CD4-positive, alpha-beta memory T cell (primary cell): ENCODE measurements at regions of chr15 and their contacts with region 1.

Region 1: GRCh38 chr15:92942706-92943105 is 42.6 kb downstream of the CHD2 start:
- DNase-seq: no peak
- H3K4me3 ChIP-seq: no peak overlapping the region
- H3K4me3 Mint-ChIP-seq: no peak overlapping the region
- H3K27ac ChIP-seq: no peak overlapping the region
- H3K27ac Mint-ChIP-seq: peak overlapping the region in 4 of 7 donors; percentile 3 to 72 (median 18)
- H3K4me1 ChIP-seq: no peaks in the 10 kb centered on the region
- H3K4me1 Mint-ChIP-seq: peaks cover 10 to 15% (median 13%) of the 10 kb centered on the region in 4 donors
- H3K27me3 ChIP-seq: no peaks in the 10 kb centered on the region
- H3K27me3 Mint-ChIP-seq: no peaks in the 10 kb centered on the region

Region 2: DNA sequence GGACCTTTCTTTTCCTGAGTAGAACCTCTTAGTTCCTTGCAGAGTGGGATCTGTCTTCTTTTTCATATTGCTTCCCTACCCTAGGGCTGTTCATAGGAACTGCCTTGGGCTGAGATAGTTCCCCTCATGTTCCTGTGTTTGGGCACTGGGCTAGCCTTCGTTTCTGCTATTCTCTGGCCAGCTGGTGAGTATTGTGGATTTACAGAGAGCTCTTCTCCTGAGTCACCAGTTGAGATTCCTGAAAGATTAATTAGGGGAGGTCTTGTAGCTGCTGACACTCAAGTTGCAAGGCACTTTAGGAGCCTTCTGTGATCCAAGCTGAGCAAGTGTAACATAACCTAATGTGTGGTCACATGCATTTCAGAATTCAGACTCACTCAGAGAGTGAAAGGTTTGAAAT is 11.9 kb before region 1 on chr15:
- CTCF ChIA-PET with region 1: interaction called, 5 read pairs
- POLR2A ChIA-PET with region 1: interaction called, 6 read pairs
- intact Hi-C with region 1: loop called (anchors 2 kb)
- DNase-seq: no peak
- H3K4me3 ChIP-seq: no peak overlapping the region
- H3K4me3 Mint-ChIP-seq: peak overlapping the region in 2 of 8 donors; percentile 10 to 25
- H3K27ac ChIP-seq: no peak overlapping the region
- H3K27ac Mint-ChIP-seq: peak overlapping the region in 4 of 7 donors; percentile 5 to 68 (median 40)
- H3K4me1 ChIP-seq: peaks cover 40% of the 10 kb centered on the region
- H3K4me1 Mint-ChIP-seq: peaks cover 33 to 69% (median 50%) of the 10 kb centered on the region in 4 donors
- H3K27me3 ChIP-seq: no peaks in the 10 kb centered on the region
- H3K27me3 Mint-ChIP-seq: no peaks in the 10 kb centered on the region

Region 3: GRCh38 chr15:92958105-92958504 is 15.4 kb after region 1 on chr15:
- CTCF ChIA-PET with region 1: interaction called, 4 read pairs
- POLR2A ChIA-PET with region 1: interaction called, 3 read pairs
- intact Hi-C with region 1: loop called (anchors 2 kb)
- DNase-seq: peak; percentile 54 to 88 (median 67)
- H3K4me3 ChIP-seq: no peak overlapping the region
- H3K4me3 Mint-ChIP-seq: peak overlapping the region in 6 of 8 donors; percentile 1 to 68 (median 40)
- H3K27ac ChIP-seq: peak overlapping the region; percentile 32
- H3K27ac Mint-ChIP-seq: peak overlapping the region; percentile 65 to 93 (median 84)
- H3K4me1 ChIP-seq: peaks cover 41% of the 10 kb centered on the region
- H3K4me1 Mint-ChIP-seq: peaks cover 31 to 57% (median 46%) of the 10 kb centered on the region in 4 donors
- H3K27me3 ChIP-seq: no peaks in the 10 kb centered on the region
- H3K27me3 Mint-ChIP-seq: no peaks in the 10 kb centered on the region